ENCODE measurements at regions of chr14 and their contacts with region 1.

Region 1: GRCh38 chr14:50778721-50779483 is 52.1 kb downstream of the NIN start:
- DNase-seq: no peak
- ATAC-seq: peak in 2 of 4 experiments; percentile 58 to 65
- H3K4me3 ChIP-seq: no peak overlapping the region
- H3K4me3 Mint-ChIP-seq: peak overlapping the region in 1 of 3 donors; percentile 45
- H3K27ac ChIP-seq: peak overlapping the region; percentile 0
- H3K27ac Mint-ChIP-seq: peak overlapping the region; percentile 92 to 98
- H3K4me1 ChIP-seq: peaks cover 18 to 35% of the 10 kb centered on the region in 2 experiments
- H3K4me1 Mint-ChIP-seq: peaks cover 54 to 66% (median 57%) of the 10 kb centered on the region in 3 donors
- H3K27me3 ChIP-seq: no peaks in the 10 kb centered on the region
- H3K27me3 Mint-ChIP-seq: no peaks in the 10 kb centered on the region

Region 2: GRCh38 chr14:50321009-50321660 is 457.8 kb before region 1 on chr14:
- CTCF ChIA-PET with region 1: interaction called in 1 of 2 experiments, 13 read pairs
- POLR2A ChIA-PET with region 1: no interaction called
- DNase-seq: peak; percentile 25 to 89 (median 61)
- ATAC-seq: peak; percentile 96 to 99 (median 98)
- H3K4me3 ChIP-seq: no peak overlapping the region
- H3K4me3 Mint-ChIP-seq: no peak overlapping the region
- H3K27ac ChIP-seq: peak overlapping the region; percentile 72
- H3K27ac Mint-ChIP-seq: no peak overlapping the region
- H3K4me1 ChIP-seq: no peaks in the 10 kb centered on the region
- H3K4me1 Mint-ChIP-seq: peaks cover 10 to 27% (median 26%) of the 10 kb centered on the region in 3 donors
- H3K27me3 ChIP-seq: no peaks in the 10 kb centered on the region
- H3K27me3 Mint-ChIP-seq: no peaks in the 10 kb centered on the region

Region 3: DNA sequence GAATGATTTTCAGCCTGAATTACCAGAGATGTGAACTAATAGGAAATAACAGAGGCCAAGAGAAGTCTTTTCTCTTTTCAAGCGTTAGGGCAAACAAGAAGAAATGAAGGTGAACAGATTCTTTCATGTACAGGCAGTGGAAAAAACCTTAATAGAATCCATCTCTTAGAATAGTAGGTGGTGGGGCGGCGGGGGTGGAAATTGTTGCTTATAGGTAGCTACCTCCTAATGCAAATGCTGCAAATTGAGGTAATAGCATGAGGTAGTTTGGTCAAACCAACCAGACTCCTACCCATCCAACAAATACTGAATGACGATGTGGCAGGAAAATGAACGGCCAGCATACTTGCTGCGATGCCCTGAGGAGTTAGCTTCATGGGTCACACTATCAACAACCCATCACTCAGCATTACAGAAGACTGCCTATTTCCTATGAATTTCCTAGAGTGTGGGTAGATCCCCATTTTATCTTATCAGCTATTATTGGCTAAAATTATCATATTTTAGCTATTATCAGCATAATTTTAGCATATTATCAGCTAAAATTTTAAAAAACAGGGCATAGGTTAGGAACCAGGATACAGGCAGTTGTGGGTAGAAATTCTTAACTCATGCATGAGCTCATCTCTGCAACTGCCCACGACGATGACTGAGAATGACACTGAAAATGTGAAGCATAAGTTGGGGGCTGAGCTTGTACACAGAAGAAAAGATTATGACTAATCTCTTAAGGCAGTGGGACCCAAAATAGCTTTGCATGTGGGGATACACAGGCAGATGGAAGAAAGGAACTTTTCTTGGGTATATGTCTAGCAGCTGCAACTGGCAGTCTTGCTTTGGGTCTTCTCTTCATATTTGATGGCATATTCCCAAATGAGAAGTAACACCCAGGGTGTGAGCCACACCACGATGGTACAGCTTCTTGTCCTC is 16.6 kb before region 1 on chr14:
- CTCF ChIA-PET with region 1: interaction called, 9 to 27 read pairs
- POLR2A ChIA-PET with region 1: interaction called, 3 read pairs
- DNase-seq: no peak
- ATAC-seq: no peak
- H3K4me3 ChIP-seq: no peak overlapping the region
- H3K4me3 Mint-ChIP-seq: no peak overlapping the region
- H3K27ac ChIP-seq: no peak overlapping the region
- H3K27ac Mint-ChIP-seq: peak overlapping the region; percentile 16 to 58
- H3K4me1 ChIP-seq: no peaks in the 10 kb centered on the region
- H3K4me1 Mint-ChIP-seq: peaks cover 0 to 4% (median 0%) of the 10 kb centered on the region in 3 donors
- H3K27me3 ChIP-seq: no peaks in the 10 kb centered on the region
- H3K27me3 Mint-ChIP-seq: no peaks in the 10 kb centered on the region